GM12878 (cell line): ENCODE measurements at regions of chr3 and their contacts with region 1.

Region 1: DNA sequence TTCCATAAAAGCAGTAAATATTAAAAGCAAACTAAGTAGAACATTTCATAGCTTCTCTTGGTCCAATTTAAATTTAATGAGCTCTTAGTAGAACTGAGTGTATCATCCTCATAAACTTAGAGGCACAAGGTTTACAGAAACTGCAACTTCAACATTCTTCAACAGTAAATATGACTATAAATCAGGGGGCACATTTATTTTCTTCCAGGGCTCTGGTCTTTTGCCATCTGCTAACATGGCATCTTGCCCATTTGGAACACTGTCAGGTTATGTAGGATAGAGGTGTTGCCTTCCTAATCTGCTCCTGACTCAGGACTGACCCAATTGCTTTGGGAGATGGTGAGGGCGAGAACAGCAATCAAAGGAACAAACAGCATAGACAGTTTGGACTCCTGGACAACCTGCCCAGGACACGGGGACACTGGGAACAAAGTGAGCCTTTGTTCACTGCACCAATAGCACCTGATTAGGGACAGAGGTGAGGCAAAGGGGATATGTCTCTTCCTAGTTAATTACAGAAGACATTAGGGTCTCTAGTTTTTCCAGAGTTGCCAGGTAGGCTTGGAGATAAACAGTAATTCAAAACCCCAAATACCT is 610.2 kb upstream of the ROBO2 start:
- DNase-seq: no peak
- ATAC-seq: no peak
- H3K4me3 ChIP-seq: no peak overlapping the region
- H3K27ac ChIP-seq: no peak overlapping the region
- H3K4me1 ChIP-seq: no peaks in the 10 kb centered on the region
- H3K27me3 ChIP-seq: no peaks in the 10 kb centered on the region
- CTCF ChIP-seq: no peak
- EP300 ChIP-seq: no peak
- POLR2A ChIP-seq: no peak
- RAD21 ChIP-seq: no peak

Region 2: DNA sequence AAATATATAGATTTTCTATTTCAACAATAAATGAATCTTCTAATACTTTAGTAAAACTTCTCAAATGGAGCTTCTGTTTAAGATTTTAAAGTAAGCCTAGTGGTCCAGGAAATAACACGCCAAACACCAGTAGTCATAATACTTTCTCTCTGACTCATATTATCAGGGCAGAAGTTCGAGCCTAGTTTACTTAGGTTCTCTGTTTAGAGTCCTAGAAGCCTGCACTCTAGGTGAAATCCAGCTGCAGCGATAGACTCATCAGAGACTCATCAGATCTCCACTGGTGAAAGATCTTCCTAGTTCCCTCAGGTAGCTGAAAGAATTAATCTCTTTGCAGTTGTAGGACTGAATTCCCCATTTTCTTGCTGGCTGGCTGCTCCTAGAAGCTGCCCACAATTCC is 57.8 kb after region 1 on chr3:
- CTCF ChIA-PET with region 1: no interaction called
- POLR2A ChIA-PET with region 1: no interaction called
- RAD21 ChIA-PET with region 1: no interaction called
- SMC1A ChIA-PET with region 1: no interaction called
- in situ Hi-C with region 1: no loop called
- intact Hi-C with region 1: loop called (anchors 10 kb)
- DNase-seq: no peak
- ATAC-seq: no peak
- H3K4me3 ChIP-seq: no peak overlapping the region
- H3K27ac ChIP-seq: no peak overlapping the region
- H3K4me1 ChIP-seq: no peaks in the 10 kb centered on the region
- H3K27me3 ChIP-seq: no peaks in the 10 kb centered on the region
- CTCF ChIP-seq: no peak
- EP300 ChIP-seq: no peak
- POLR2A ChIP-seq: no peak
- RAD21 ChIP-seq: no peak

Region 3: DNA sequence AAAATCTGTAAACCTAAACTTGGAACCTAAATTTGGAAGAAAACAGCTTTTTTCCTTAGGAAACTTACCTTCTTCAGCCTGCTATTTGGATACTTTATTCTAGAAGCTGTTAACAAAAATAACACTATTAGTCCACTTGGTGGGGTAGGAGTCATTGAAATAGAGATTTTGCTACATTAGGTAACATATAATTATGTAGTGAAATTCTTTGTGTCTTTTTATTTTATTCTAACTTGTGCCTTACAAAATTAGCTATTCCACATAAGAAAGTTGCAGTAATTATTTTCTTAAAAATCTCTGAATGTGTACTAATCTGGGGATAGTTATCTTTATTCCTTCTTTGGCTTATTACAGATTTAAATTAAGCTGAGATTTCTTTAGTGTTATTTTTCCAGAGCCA is 249.9 kb after region 1 on chr3:
- CTCF ChIA-PET with region 1: no interaction called
- POLR2A ChIA-PET with region 1: no interaction called
- RAD21 ChIA-PET with region 1: no interaction called
- SMC1A ChIA-PET with region 1: no interaction called
- in situ Hi-C with region 1: no loop called
- intact Hi-C with region 1: no loop called
- DNase-seq: no peak
- ATAC-seq: no peak
- H3K4me3 ChIP-seq: no peak overlapping the region
- H3K27ac ChIP-seq: no peak overlapping the region
- H3K4me1 ChIP-seq: no peaks in the 10 kb centered on the region
- H3K27me3 ChIP-seq: no peaks in the 10 kb centered on the region
- CTCF ChIP-seq: no peak; a peak in 1 of 6 replicates
- EP300 ChIP-seq: no peak
- POLR2A ChIP-seq: no peak
- RAD21 ChIP-seq: no peak